Heart left ventricle (tissue), 16 donors: ENCODE measurements at regions of chr6 and their contacts with region 1.

Region 1: GRCh38 chr6:135667691-135668455 is 170.3 kb upstream of the AHI1 start:
- DNase-seq: peak in 4 of 5 donors; percentile 30 to 43 (median 32)
- ATAC-seq: peak in 3 of 4 donors; percentile 74 to 84 (median 78)
- H3K4me3 ChIP-seq: peak overlapping the region in 8 of 12 donors; percentile 2 to 36 (median 22)
- H3K27ac ChIP-seq: peak overlapping the region in 1 of 12 donors; percentile 52
- H3K4me1 ChIP-seq: peaks cover 0 to 8% (median 3%) of the 10 kb centered on the region in 12 donors
- H3K27me3 ChIP-seq: no peaks in the 10 kb centered on the region
- CTCF ChIP-seq: no peak
- POLR2A ChIP-seq: no peak

Region 2: DNA sequence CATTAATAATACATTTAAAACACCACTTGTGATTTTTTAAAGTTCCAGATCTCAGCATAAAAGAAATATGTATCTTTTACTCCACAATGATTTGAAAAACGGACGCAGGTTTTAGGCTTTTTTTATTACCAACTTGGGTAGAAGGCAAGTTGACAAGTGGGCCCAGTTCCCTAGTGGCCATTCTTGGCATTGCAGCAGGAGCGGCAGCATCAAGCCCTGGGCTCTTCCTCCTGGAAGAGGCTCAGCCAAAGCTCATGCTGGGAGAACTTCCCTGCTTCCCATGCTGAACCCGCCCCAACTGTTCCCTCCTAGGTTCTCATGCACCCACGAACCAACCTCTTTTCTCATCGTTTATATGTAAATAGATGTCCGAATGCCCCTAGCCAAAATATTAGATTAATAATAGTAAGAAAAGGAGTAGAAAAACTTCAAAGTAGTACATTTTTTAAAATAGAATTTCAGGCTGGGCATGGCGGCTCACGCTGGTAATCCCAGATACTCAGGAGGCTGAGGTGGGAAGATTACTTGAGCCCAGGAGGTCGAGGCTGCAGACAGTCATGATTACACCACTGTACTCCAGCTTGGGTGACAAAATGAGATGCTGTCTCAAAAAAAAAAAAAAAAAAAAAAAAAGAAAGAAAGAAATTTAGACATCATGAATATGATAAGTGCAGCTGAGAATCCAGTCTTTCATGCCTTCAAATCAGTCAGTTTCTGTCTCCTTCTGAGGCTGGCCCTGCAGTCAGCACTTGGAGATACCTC is 505.0 kb before region 1 on chr6:
- intact Hi-C with region 1: no loop called
- DNase-seq: peak in 1 of 5 donors; percentile 50
- ATAC-seq: no peak
- H3K4me3 ChIP-seq: no peak overlapping the region
- H3K27ac ChIP-seq: no peak overlapping the region
- H3K4me1 ChIP-seq: no peaks in the 10 kb centered on the region
- H3K27me3 ChIP-seq: peaks cover 0 to 18% (median 6%) of the 10 kb centered on the region in 9 donors
- CTCF ChIP-seq: peak; percentile 20 to 70 (median 49)
- POLR2A ChIP-seq: no peak

Region 3: DNA sequence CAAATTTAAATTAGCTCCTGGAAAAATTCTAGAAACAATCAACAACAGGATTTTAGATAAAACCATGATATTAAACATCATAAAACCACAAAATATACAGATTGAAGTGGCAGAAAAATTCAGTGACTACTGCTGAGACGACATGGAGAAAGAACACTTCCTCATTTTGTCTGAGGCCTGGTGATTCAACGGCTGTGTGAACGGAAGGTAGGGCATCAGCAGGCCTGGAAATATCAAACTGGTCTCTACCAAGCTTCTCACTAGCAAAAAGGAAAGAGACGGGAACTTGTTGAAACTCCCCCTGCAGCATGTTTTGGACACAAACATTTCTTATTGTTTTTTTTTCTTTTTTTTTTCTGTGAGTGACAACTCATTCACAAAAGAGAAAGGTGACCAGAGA is 112.3 kb before region 1 on chr6:
- intact Hi-C with region 1: loop called in 1 of 10 experiments (anchors 10 kb)
- DNase-seq: no peak
- ATAC-seq: no peak
- H3K4me3 ChIP-seq: no peak overlapping the region
- H3K27ac ChIP-seq: no peak overlapping the region
- H3K4me1 ChIP-seq: no peaks in the 10 kb centered on the region
- H3K27me3 ChIP-seq: no peaks in the 10 kb centered on the region
- CTCF ChIP-seq: no peak
- POLR2A ChIP-seq: no peak

Region 4: GRCh38 chr6:135592276-135592675 is 75.6 kb before region 1 on chr6:
- intact Hi-C with region 1: loop called in 1 of 10 experiments (anchors 2 kb)
- DNase-seq: no peak
- ATAC-seq: no peak
- H3K4me3 ChIP-seq: no peak overlapping the region
- H3K27ac ChIP-seq: no peak overlapping the region
- H3K4me1 ChIP-seq: no peaks in the 10 kb centered on the region
- H3K27me3 ChIP-seq: no peaks in the 10 kb centered on the region
- CTCF ChIP-seq: no peak
- POLR2A ChIP-seq: no peak

Region 5: GRCh38 chr6:135604035-135604860 is 63.6 kb before region 1 on chr6:
- intact Hi-C with region 1: no loop called
- DNase-seq: no peak
- ATAC-seq: no peak
- H3K4me3 ChIP-seq: no peak overlapping the region
- H3K27ac ChIP-seq: no peak overlapping the region
- H3K4me1 ChIP-seq: no peaks in the 10 kb centered on the region
- H3K27me3 ChIP-seq: no peaks in the 10 kb centered on the region
- CTCF ChIP-seq: no peak
- POLR2A ChIP-seq: no peak